K562 (cell line): ENCODE measurements at regions of chr17 and their contacts with region 1.

Region 1: DNA sequence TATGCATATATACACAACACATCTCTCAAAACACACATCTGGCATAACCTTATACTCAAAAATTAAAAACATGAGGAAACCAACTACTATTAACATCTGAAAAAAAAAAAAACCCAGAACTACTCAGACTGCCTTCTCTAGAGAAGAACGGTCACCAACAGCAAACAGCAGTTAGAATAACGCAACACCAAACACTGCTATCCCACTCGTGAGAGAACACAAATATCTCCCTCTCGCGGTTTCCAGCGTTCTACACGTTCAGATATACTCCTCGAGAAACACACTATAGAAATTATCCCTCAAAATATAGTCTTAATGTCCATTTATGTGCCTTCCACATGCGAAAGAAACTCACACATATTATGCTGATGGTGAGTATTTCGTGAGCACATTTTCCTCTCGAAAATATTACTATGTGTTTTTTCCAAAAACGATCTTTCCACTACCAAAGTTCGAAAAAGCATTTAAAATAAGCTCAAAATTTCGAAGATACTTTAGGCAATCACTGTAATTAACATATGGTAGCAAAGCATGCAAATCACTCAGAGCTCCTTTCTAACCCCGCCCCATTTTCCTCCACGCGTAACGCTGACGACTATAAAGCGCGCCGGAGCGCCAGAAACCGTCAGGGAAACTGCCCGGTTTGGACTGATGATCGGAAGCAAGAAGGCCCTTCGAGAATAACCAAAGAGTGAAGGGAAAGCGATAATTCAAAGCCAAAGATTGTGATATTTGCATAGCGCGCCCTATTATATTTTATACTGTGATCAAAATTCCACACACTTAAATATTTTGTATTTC is 60.1 kb downstream of the TEX14 start:
- DNase-seq: peak; percentile 85 to 98 (median 86)
- ATAC-seq: peak; percentile 96
- H3K4me3 ChIP-seq: peak overlapping the region; percentile 35
- H3K27ac ChIP-seq: peak overlapping the region; percentile 94
- H3K4me1 ChIP-seq: peaks cover 0 to 8% of the 10 kb centered on the region in 2 experiments; a peak in 2 of 5 replicates
- H3K27me3 ChIP-seq: no peaks in the 10 kb centered on the region
- CTCF ChIP-seq: peak; percentile 15 to 31 (median 21); a peak in 1 of 6 replicates
- EP300 ChIP-seq: peak; percentile 78
- POLR2A ChIP-seq: peak; percentile 100
- RAD21 ChIP-seq: peak in 1 of 2 experiments; percentile 52; a peak in 1 of 4 replicates

Region 2: GRCh38 chr17:58337600-58338453 is 293.9 kb before region 1 on chr17:
- CTCF ChIA-PET with region 1: no interaction called
- POLR2A ChIA-PET with region 1: interaction called, 5 read pairs
- in situ Hi-C with region 1: no loop called
- intact Hi-C with region 1: loop called (anchors 10 kb)
- DNase-seq: peak; percentile 58 to 96 (median 75)
- ATAC-seq: peak; percentile 80
- H3K4me3 ChIP-seq: peak overlapping the region; percentile 91
- H3K27ac ChIP-seq: peak overlapping the region; percentile 99
- H3K4me1 ChIP-seq: peaks cover 62 to 71% of the 10 kb centered on the region in 2 experiments
- H3K27me3 ChIP-seq: no peaks in the 10 kb centered on the region
- CTCF ChIP-seq: 0 out of 6 replicates have a peak, but pooled peaks of 1 of the 3 experiments have one; percentile 12
- EP300 ChIP-seq: peak; percentile 74
- POLR2A ChIP-seq: peak; percentile 90
- RAD21 ChIP-seq: peak; percentile 3 to 6; a peak in 3 of 4 replicates

Region 3: DNA sequence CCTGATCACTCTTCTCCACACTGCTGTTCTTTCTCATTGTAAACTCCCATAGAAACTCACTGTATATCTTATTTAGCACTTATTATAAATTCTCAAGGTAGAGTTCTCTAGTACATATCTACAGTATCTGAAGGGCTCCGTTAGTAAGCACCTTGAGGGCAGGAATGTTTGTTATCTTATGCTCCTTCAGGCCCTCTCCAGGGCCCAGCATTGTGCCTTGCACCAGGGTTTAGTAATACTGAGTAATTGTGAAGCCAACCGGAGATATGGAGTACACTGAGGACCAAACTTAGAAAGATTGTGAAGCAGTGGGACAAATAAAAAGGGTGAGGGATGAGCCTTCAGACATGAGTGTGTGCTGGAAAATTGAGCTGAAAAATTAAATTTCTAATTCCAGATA is 240.8 kb before region 1 on chr17:
- CTCF ChIA-PET with region 1: no interaction called
- POLR2A ChIA-PET with region 1: no interaction called
- in situ Hi-C with region 1: no loop called
- intact Hi-C with region 1: no loop called
- DNase-seq: no peak
- ATAC-seq: no peak
- H3K4me3 ChIP-seq: no peak overlapping the region
- H3K27ac ChIP-seq: peak overlapping the region; percentile 72; the same call in 2 of the 3 replicates
- H3K4me1 ChIP-seq: peaks cover 23 to 55% of the 10 kb centered on the region in 2 experiments
- H3K27me3 ChIP-seq: no peaks in the 10 kb centered on the region
- CTCF ChIP-seq: no peak
- EP300 ChIP-seq: no peak
- POLR2A ChIP-seq: no peak
- RAD21 ChIP-seq: no peak

Region 4: DNA sequence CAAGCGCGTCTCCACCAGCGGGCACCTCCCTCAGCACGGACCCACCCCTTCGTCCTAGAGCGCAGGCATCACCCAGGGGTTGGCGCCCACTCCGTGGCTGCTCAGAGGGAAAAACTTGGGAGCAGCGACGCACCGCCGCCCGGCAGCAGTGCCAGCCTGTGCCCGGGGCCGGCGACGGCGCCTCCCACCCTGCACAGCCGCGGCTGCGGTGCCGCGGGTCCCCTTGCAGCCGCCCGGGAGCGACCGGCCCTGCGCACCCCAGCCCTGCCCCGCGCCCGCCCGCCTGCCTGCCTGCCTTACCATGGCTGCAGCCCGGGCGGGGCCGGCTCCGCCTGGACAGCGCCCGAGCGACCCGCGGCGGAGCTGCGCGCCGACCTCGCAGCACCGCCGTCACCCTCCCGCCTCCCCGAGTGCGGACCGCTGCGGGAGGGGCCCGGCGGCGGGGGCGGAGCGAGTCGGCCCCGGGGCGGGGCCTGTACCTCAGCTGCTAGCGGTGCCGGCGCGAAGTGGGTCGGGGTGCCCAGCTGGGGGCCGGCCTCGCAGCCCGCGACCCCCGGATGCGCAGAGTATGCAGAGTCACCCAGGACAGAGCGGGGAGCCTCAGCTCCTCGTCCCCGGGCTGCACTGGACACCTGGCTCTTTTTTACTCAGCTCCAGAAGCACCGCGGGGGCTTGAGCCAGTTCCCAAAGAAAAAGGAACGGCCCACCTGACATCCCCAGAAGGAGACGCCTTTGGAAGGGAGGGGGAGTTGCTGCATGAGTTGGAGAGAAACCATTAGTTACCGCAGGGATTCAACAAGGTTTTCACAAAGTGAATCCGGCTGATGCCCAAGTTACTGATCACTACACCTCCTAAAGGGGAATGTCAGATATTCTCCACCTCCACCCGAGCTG is 99.8 kb before region 1 on chr17:
- CTCF ChIA-PET with region 1: no interaction called
- POLR2A ChIA-PET with region 1: interaction called, 24 read pairs
- in situ Hi-C with region 1: no loop called
- intact Hi-C with region 1: no loop called
- DNase-seq: peak; percentile 77 to 96 (median 92)
- ATAC-seq: peak; percentile 97
- H3K4me3 ChIP-seq: peak overlapping the region; percentile 33
- H3K27ac ChIP-seq: no peak overlapping the region
- H3K4me1 ChIP-seq: peaks cover 7 to 10% of the 10 kb centered on the region in 2 experiments; a peak in 4 of 5 replicates
- H3K27me3 ChIP-seq: peaks cover 2 to 7% of the 10 kb centered on the region in 2 experiments; a peak in 4 of 5 replicates
- CTCF ChIP-seq: no peak
- EP300 ChIP-seq: no peak
- POLR2A ChIP-seq: no peak
- RAD21 ChIP-seq: no peak

Region 5: GRCh38 chr17:58587702-58588254 is 43.9 kb before region 1 on chr17:
- CTCF ChIA-PET with region 1: no interaction called
- POLR2A ChIA-PET with region 1: interaction called, 12 read pairs
- in situ Hi-C with region 1: no loop called
- intact Hi-C with region 1: loop called (anchors 1 kb)
- DNase-seq: peak; percentile 73 to 90 (median 84)
- ATAC-seq: peak; percentile 94
- H3K4me3 ChIP-seq: no peak overlapping the region
- H3K27ac ChIP-seq: no peak overlapping the region
- H3K4me1 ChIP-seq: no peaks in the 10 kb centered on the region
- H3K27me3 ChIP-seq: peaks cover 5 to 11% of the 10 kb centered on the region in 2 experiments; a peak in 3 of 5 replicates
- CTCF ChIP-seq: peak; percentile 83 to 94 (median 87)
- EP300 ChIP-seq: no peak
- POLR2A ChIP-seq: no peak
- RAD21 ChIP-seq: peak; percentile 77 to 84

Region 6: DNA sequence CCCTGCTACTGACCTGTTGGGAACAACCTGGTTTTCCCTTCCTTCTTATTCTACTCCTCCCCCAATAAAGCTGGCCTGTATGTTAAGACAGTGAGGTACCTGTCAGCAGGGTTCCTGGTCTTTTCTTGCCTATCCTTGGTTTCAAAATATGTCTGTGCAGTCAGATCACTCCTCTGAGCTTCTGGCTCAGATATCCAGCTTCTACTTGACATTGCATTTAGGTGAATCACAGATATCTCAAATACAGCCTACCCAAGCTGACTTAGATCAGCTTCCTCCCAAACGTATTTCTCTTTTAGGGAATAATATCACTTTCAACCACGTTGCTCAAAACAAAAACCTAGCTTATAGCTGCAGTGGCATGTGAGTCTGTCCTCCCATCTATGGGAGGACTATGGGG is 11.4 kb after region 1 on chr17:
- CTCF ChIA-PET with region 1: no interaction called
- POLR2A ChIA-PET with region 1: interaction called, 122 read pairs
- in situ Hi-C with region 1: no loop called
- intact Hi-C with region 1: no loop called
- DNase-seq: no peak
- ATAC-seq: no peak
- H3K4me3 ChIP-seq: no peak overlapping the region
- H3K27ac ChIP-seq: no peak overlapping the region
- H3K4me1 ChIP-seq: no peaks in the 10 kb centered on the region; a peak in 1 of 5 replicates
- H3K27me3 ChIP-seq: no peaks in the 10 kb centered on the region
- CTCF ChIP-seq: no peak
- EP300 ChIP-seq: no peak
- POLR2A ChIP-seq: no peak
- RAD21 ChIP-seq: no peak

Region 7: GRCh38 chr17:58666858-58667619 is 35.3 kb after region 1 on chr17:
- CTCF ChIA-PET with region 1: no interaction called
- POLR2A ChIA-PET with region 1: interaction called, 281 read pairs
- in situ Hi-C with region 1: no loop called
- intact Hi-C with region 1: no loop called
- DNase-seq: peak; percentile 76 to 95 (median 78)
- ATAC-seq: peak; percentile 88
- H3K4me3 ChIP-seq: peak overlapping the region; percentile 25
- H3K27ac ChIP-seq: peak overlapping the region; percentile 81
- H3K4me1 ChIP-seq: peaks cover 15 to 26% of the 10 kb centered on the region in 2 experiments
- H3K27me3 ChIP-seq: no peaks in the 10 kb centered on the region
- CTCF ChIP-seq: no peak
- EP300 ChIP-seq: no peak
- POLR2A ChIP-seq: no peak
- RAD21 ChIP-seq: no peak

Region 8: DNA sequence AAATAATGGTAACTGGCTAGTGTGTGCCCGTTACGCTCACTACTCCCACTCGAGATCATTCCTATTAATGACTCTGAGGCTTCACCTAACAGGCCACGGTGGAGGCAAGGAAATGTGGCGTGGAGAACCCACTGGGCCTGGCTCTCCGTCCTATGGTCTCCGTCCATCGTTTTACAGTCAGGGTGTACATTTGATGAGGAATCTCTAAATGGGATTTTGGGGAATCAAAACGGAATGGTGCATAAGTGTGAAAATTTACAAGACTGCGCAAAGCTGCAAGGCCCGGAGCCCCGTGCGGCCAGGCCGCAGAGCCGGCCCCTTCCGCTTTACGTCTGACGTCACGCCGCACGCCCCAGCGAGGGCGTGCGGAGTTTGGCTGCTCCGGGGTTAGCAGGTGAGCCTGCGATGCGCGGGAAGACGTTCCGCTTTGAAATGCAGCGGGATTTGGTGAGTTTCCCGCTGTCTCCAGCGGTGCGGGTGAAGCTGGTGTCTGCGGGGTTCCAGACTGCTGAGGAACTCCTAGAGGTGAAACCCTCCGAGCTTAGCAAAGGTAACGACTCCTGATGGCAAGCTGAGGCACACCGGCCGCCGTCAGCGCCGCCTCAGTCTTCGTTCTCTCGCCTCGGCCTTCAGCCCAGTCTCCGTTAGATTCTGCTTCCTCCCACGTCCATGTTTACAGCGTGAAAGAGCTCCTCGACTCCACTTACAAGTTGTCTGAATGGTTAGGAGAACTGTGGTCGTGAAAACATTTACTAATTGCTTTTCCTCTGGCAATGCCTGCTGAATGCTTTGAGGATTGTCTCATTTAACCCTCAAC is 60.7 kb after region 1 on chr17 and contains the start of gene RAD51C:
- CTCF ChIA-PET with region 1: no interaction called
- POLR2A ChIA-PET with region 1: interaction called, 41 read pairs
- in situ Hi-C with region 1: no loop called
- intact Hi-C with region 1: loop called (anchors 1 kb)
- DNase-seq: peak; percentile 90 to 97 (median 91)
- ATAC-seq: peak; percentile 96
- H3K4me3 ChIP-seq: peak within 1 kb of the TSS; percentile 52
- H3K27ac ChIP-seq: peak within 1 kb of the TSS; percentile 87
- H3K4me1 ChIP-seq: peaks cover 6% of the 10 kb centered on the region in 2 experiments
- H3K27me3 ChIP-seq: no peaks in the 10 kb centered on the region
- CTCF ChIP-seq: no peak
- EP300 ChIP-seq: peak; percentile 8; the same call in 1 of the 2 replicates
- POLR2A ChIP-seq: peak; percentile 95
- RAD21 ChIP-seq: no peak
- polyA plus RNA-seq, gene RAD51C: 341 TPM

Region 9: DNA sequence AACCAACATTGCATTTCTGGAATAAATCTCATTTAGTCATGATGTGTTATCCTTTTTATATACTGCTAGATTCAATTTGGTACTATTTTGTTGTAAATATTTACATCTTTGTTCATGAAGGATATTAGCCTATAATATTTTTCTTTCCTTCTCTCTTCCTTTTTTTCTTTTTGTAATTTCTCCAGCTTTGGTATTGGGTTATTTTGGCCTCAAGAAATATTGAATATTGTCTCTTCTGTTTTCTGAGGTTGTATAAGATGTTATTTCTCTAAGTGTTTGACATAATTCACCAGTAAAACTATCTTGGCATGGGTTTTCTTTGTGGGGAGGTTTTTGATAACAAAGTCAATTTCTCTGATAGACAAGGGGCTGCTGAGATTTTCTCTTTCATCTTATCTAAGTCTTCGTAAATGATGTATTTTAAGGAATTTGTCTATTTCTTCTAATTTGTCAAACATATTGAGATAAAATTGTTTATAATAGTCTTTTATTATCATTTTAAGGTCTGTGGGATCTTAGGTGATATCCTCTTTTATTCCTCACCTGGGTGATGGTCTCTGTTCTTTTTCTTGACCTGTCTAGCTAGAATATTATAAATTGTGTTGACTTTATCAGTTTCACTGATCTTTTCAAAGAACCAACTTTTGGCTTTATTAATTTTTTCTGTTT is 168.7 kb after region 1 on chr17:
- CTCF ChIA-PET with region 1: no interaction called
- POLR2A ChIA-PET with region 1: no interaction called
- in situ Hi-C with region 1: no loop called
- intact Hi-C with region 1: no loop called
- DNase-seq: no peak
- ATAC-seq: no peak
- H3K4me3 ChIP-seq: no peak overlapping the region
- H3K27ac ChIP-seq: no peak overlapping the region
- H3K4me1 ChIP-seq: no peaks in the 10 kb centered on the region
- H3K27me3 ChIP-seq: no peaks in the 10 kb centered on the region
- CTCF ChIP-seq: no peak
- EP300 ChIP-seq: no peak
- POLR2A ChIP-seq: no peak
- RAD21 ChIP-seq: no peak